Heart left ventricle (tissue), 16 donors: ENCODE measurements at regions of chr5 and their contacts with region 1.

Region 1: GRCh38 chr5:134215757-134216156 is 10.1 kb downstream of the PPP2CA start:
- DNase-seq: no peak
- ATAC-seq: no peak
- H3K4me3 ChIP-seq: no peak overlapping the region
- H3K27ac ChIP-seq: peak overlapping the region in 1 of 12 donors; percentile 28
- H3K4me1 ChIP-seq: peaks cover 4 to 88% (median 58%) of the 10 kb centered on the region in 12 donors
- H3K27me3 ChIP-seq: no peaks in the 10 kb centered on the region
- CTCF ChIP-seq: no peak
- POLR2A ChIP-seq: no peak

Region 2: DNA sequence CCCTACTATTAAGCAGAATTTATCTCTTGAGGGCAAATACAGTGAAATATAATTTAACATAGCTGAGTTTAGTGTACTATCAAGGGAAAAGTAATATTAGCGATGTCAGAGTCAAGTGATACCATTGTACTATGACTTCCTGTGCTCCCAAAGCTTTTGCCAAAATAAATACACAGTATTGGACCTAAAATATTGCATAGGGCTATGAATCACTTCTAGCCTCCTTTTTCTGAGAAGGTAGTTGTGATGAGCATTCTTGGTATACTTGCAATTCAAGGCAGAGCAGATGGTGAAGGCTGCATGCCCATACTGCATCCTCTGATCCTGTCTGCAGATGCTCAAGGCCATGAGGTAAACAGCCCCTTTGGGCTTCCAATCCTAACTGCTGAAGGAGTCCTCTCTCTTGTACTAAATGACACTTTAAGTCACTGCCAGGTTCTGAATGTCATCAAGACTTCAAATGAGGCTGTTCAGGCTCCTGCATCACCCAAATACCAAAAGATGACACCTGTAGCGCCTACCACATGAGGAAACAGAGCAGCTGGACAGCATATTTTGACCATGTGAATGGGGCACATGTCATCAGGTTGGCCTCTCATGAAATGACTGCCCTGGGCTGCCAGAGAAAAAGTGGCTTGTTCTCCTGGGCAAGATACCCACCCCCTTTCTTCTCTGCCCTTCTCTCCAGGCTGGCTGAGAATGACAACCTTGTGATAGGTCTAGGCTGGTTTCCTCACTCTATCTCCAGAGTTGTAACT is 39.8 kb after region 1 on chr5:
- intact Hi-C with region 1: loop called in 1 of 10 experiments (anchors 2 kb)
- DNase-seq: no peak
- ATAC-seq: peak in 3 of 4 donors; percentile 45 to 81 (median 71)
- H3K4me3 ChIP-seq: no peak overlapping the region
- H3K27ac ChIP-seq: peak overlapping the region in 6 of 12 donors; percentile 8 to 51 (median 34)
- H3K4me1 ChIP-seq: peaks cover 0 to 35% (median 16%) of the 10 kb centered on the region in 12 donors
- H3K27me3 ChIP-seq: no peaks in the 10 kb centered on the region
- CTCF ChIP-seq: no peak
- POLR2A ChIP-seq: no peak